ENCODE measurements at regions of chr1 and their contacts with region 1.

Region 1: GRCh38 chr1:224182866-224183590 is at the start of gene DEGS1:
- DNase-seq: peak; percentile 91
- ATAC-seq: peak; percentile 77
- H3K4me3 Mint-ChIP-seq: peak within 1 kb of the TSS; percentile 82
- H3K27ac Mint-ChIP-seq: peak within 1 kb of the TSS; percentile 95
- H3K4me1 Mint-ChIP-seq: peaks cover 45% of the 10 kb centered on the region
- H3K27me3 Mint-ChIP-seq: peaks cover 5% of the 10 kb centered on the region
- total RNA-seq, gene DEGS1: 24.0 to 24.5 TPM

Region 2: DNA sequence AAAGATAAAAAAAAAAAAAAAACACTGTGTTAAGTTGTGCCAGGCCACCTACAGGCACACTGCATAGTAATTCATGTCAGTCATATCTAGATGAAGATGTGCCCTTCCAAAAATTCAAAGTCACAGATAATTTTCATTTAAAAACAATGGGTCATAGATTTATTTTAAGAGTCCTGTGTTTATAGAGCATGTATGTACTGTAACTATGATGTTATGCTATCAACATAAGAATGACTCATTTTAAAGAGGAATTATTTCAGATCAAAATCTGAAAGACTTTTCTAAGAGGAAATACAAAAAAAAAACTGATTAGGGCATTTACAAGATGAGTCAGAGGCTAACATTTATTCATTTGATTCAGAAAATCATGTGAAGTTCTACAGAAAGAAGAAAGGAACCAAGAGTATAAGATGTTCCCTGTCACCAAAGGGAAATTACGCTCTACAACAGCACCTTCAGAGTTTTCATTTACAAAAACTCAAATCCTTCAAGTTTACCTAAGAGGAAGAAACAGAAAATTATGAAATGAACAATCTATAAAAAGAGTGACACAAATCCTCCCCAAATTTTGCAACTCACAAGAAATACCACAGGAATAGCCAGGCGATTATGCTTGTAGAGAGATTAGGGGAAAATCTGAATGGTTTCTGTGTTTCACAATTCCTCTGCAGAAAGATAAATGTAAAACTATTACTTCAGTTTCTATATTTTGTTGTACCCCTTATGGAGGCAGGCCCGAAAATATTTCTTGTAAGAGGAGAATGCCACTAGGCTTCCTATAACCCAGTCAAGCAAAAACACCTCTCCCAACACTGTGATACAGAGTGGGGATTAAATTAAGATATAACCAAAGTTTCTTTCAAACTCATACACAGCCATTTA is 351.0 kb before region 1 on chr1:
- CTCF ChIA-PET with region 1: interaction called, 4 read pairs
- POLR2A ChIA-PET with region 1: no interaction called
- intact Hi-C with region 1: loop called (anchors 1 to 10 kb)
- DNase-seq: no peak
- ATAC-seq: peak; percentile 71
- H3K4me3 Mint-ChIP-seq: no peak overlapping the region
- H3K27ac Mint-ChIP-seq: no peak overlapping the region
- H3K4me1 Mint-ChIP-seq: peaks cover 29% of the 10 kb centered on the region
- H3K27me3 Mint-ChIP-seq: no peaks in the 10 kb centered on the region

Region 3: DNA sequence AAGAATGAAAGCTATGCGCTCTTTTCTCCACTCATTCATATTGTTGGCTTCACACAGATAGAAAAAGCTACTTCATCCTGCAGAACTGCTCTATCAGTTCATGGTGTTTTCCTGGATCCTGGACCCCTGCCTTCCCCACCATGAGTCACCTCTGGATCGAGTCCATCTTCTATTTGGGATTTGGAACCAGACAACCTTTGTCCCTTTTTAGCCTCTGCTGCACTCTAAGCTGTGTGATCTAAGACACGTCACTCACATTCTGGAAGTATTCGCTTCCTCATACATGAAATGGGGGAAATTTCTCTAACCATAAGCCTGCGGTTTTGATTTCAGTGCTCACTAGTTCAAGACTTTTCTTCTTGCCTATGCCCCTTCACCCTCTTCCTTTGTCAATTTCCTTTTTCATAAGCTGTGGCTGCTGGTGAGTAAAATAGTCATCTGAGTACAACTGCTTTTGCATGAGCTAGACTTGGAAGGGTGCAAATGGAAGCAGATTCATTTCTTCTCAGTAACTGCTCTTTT is 14.1 kb before region 1 on chr1:
- CTCF ChIA-PET with region 1: interaction called, 5 read pairs
- POLR2A ChIA-PET with region 1: interaction called, 5 read pairs
- intact Hi-C with region 1: loop called (anchors 1 kb)
- DNase-seq: peak; percentile 29
- ATAC-seq: peak; percentile 96
- H3K4me3 Mint-ChIP-seq: peak overlapping the region; percentile 14
- H3K27ac Mint-ChIP-seq: peak overlapping the region; percentile 55
- H3K4me1 Mint-ChIP-seq: peaks cover 36% of the 10 kb centered on the region
- H3K27me3 Mint-ChIP-seq: no peaks in the 10 kb centered on the region

Region 4: GRCh38 chr1:224329842-224330753 is 147.1 kb after region 1 on chr1 and contains the start of gene NVL:
- CTCF ChIA-PET with region 1: interaction called, 3 read pairs
- POLR2A ChIA-PET with region 1: interaction called, 4 read pairs
- intact Hi-C with region 1: loop called (anchors 1 to 5 kb)
- DNase-seq: peak; percentile 89
- ATAC-seq: peak; percentile 81
- H3K4me3 Mint-ChIP-seq: peak within 1 kb of the TSS; percentile 88
- H3K27ac Mint-ChIP-seq: peak within 1 kb of the TSS; percentile 92
- H3K4me1 Mint-ChIP-seq: peaks cover 36% of the 10 kb centered on the region
- H3K27me3 Mint-ChIP-seq: no peaks in the 10 kb centered on the region
- total RNA-seq, gene NVL: 34.2 to 44.1 TPM

Region 5: GRCh38 chr1:224466154-224466553 is 283.1 kb after region 1 on chr1:
- CTCF ChIA-PET with region 1: no interaction called
- POLR2A ChIA-PET with region 1: no interaction called
- intact Hi-C with region 1: no loop called
- DNase-seq: no peak
- ATAC-seq: no peak
- H3K4me3 Mint-ChIP-seq: no peak overlapping the region
- H3K27ac Mint-ChIP-seq: no peak overlapping the region
- H3K4me1 Mint-ChIP-seq: peaks cover 13% of the 10 kb centered on the region
- H3K27me3 Mint-ChIP-seq: no peaks in the 10 kb centered on the region

Region 6: GRCh38 chr1:224497714-224498573 is 314.9 kb after region 1 on chr1:
- CTCF ChIA-PET with region 1: no interaction called
- POLR2A ChIA-PET with region 1: no interaction called
- intact Hi-C with region 1: loop called (anchors 5 kb)
- DNase-seq: peak; percentile 88
- ATAC-seq: peak; percentile 97
- H3K4me3 Mint-ChIP-seq: peak overlapping the region; percentile 44
- H3K27ac Mint-ChIP-seq: peak overlapping the region; percentile 96
- H3K4me1 Mint-ChIP-seq: peaks cover 42% of the 10 kb centered on the region
- H3K27me3 Mint-ChIP-seq: no peaks in the 10 kb centered on the region

Region 7: DNA sequence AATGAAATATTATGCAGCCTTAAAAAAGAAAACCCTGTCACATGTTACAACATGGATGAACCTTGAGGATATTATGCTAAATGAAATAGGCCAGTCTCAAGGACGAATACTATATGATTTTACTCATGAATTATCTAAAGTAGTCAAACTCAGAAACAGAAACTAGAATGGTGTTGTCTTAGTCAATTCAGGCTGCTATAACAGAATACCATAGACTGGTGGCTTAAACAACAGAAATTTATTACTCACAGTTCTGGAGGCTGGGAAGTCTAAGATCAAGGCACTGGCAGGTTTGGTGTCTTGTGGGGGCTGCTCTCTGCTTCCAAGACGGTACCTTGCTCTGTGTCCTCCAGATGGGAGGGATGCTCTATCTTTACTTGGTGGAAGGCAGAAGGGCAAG is 632.6 kb after region 1 on chr1:
- CTCF ChIA-PET with region 1: no interaction called
- POLR2A ChIA-PET with region 1: no interaction called
- intact Hi-C with region 1: no loop called
- DNase-seq: no peak
- ATAC-seq: no peak
- H3K4me3 Mint-ChIP-seq: no peak overlapping the region
- H3K27ac Mint-ChIP-seq: no peak overlapping the region
- H3K4me1 Mint-ChIP-seq: no peaks in the 10 kb centered on the region
- H3K27me3 Mint-ChIP-seq: peaks cover 3% of the 10 kb centered on the region

Measured in activated CD4-positive, alpha-beta T cell treated with anti-CD3 and anti-CD28 coated beads for 36 hours (primary cell).